ENCODE measurements at regions of chr22 and their contacts with region 1.

Region 1: GRCh38 chr22:19959043-19959586 is 17.5 kb upstream of the TXNRD2 start:
- H3K4me3 ChIP-seq: peak overlapping the region; percentile 33
- H3K27ac ChIP-seq: no peak overlapping the region
- H3K4me1 ChIP-seq: peaks cover 6% of the 10 kb centered on the region; the same call in 1 of the 2 replicates
- CTCF ChIP-seq: no peak

Region 2: DNA sequence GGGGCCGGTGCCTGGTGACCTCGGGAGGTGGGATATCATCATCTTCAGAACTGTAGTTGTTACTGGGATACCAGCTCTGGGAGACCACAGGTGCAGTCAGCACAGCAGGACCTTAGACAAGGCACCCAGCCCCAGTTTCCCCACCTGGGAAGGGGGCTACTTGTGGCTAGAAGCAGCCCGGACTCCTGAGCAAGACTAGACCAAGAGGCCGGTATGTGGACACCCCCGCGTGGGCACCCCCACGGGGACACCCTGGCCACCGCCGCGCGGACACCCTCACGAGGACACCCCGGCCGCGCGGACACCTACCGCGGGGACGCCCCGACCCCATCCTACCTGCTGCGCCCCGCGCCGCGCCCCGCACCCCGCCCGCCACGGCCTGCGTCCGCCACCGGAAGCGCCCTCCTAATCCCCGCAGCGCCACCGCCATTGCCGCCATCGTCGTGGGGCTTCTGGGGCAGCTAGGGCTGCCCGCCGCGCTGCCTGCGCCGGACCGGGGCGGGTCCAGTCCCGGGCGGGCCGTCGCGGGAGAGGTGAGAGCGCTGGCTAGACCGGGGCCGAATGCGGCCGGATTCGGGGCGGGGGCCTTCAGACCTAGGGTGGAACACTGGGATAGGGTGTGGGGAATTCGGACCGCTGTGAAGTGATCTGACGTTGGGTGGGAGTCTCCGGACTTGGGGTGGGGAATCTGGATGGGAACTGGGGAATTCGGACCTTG is 17.6 kb before region 1 on chr22 and contains the starts of genes COMT and TXNRD2:
- CTCF ChIA-PET with region 1: interaction called, 33 read pairs
- POLR2A ChIA-PET with region 1: interaction called, 9 read pairs
- H3K4me3 ChIP-seq: peak within 1 kb of the TSS; percentile 79
- H3K27ac ChIP-seq: peak within 1 kb of the TSS; percentile 81
- H3K4me1 ChIP-seq: peaks cover 4% of the 10 kb centered on the region; the same call in 1 of the 2 replicates
- CTCF ChIP-seq: no peak

Region 3: DNA sequence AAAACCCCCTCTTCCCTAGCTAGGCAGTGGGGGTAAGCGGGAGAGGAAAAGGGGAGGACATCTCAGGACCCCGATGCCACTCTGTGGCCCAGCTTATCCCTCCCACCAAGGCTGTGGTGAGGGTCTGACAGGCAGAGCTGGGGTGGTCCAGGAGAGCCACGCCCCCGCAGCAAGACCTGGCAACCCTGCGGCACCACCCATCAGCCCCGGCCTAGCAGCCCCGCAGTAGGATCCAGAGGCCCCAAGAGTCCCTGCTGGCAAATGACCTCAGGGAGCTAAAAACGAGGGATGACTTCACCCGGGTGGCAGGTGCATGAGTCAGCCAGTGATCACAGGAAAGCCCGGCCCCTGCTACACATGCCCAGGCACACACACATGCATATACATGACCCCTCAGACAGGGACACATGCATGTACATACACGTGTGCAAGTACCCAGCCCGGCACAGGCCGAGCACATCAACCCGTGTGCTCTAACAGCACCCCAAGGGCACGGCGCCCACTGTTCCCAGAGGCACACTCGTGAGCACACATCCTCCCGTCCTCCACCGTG is 25.2 kb after region 1 on chr22:
- CTCF ChIA-PET with region 1: interaction called, 10 read pairs
- POLR2A ChIA-PET with region 1: no interaction called
- H3K4me3 ChIP-seq: no peak overlapping the region
- H3K27ac ChIP-seq: peak overlapping the region; percentile 42
- H3K4me1 ChIP-seq: peaks cover 14% of the 10 kb centered on the region
- CTCF ChIP-seq: no peak